ENCODE measurements at regions of chr2 and their contacts with region 1.

Region 1: GRCh38 chr2:142130111-142131009 is 456 bp downstream of the LRP1B start:
- ATAC-seq: peak; percentile 68 to 91 (median 88)
- H3K4me3 ChIP-seq: peak overlapping the region; percentile 49 to 73 (median 60)
- H3K27ac ChIP-seq: peak overlapping the region; percentile 39 to 62
- H3K4me1 ChIP-seq: peaks cover 5 to 6% of the 10 kb centered on the region in 2 donors

Region 2: GRCh38 chr2:142989273-142990204 is 859.2 kb after region 1 on chr2:
- in situ Hi-C with region 1: loop called in 1 of 9 experiments (anchors 25 kb)
- ATAC-seq: peak in 5 of 8 experiments; percentile 37 to 66 (median 52)
- H3K4me3 ChIP-seq: no peak overlapping the region
- H3K27ac ChIP-seq: no peak overlapping the region
- H3K4me1 ChIP-seq: peaks cover 0 to 7% of the 10 kb centered on the region in 2 donors

Measured in motor neuron (in vitro differentiated cells).